ENCODE measurements at regions of chr17 and their contacts with region 1.

Region 1: DNA sequence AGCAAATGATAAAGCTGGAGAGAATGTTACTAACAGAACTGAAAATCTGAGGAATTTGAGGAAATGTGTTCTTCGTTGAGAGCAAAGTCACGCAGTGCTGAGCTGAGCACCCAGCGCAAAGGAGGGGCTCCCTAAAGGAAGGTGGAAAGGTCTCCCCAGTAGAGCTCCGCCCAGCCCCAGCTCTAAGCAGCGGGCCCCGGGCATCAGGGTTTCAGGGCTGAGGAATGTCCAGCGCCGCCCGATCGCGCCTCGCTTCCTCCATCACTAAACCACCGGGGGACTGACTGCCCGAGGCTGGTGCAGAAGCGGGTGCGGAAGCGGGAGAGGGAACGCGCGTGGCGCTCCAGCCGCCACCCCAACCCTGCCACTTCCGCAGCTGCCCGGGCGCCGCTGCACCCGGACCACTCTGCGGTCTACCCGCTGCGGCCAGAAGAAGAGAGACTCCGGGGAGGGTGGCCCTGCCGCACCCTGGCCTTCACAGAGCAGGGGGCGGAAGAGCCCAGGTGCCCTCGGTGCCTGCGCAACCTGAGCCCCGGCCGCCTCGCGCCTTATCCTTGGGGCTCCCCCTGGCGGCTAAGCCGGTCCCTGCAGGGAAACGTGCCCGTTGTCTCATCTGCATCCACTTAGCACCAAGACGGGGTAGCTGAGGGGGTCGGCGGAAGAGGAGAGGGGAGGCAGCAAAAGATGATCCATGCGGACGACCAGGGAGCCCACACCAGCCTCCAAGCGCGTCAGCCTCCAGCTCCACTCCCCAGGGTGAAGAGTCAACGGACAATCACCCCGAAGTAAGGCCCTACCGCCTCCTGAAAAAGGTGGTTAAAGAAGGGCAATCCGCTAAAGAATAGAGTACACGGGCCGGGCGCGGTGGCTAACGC is 12.4 kb upstream of the GUCY2D start:
- DNase-seq: peak; percentile 92
- ATAC-seq: peak; percentile 81

Region 2: DNA sequence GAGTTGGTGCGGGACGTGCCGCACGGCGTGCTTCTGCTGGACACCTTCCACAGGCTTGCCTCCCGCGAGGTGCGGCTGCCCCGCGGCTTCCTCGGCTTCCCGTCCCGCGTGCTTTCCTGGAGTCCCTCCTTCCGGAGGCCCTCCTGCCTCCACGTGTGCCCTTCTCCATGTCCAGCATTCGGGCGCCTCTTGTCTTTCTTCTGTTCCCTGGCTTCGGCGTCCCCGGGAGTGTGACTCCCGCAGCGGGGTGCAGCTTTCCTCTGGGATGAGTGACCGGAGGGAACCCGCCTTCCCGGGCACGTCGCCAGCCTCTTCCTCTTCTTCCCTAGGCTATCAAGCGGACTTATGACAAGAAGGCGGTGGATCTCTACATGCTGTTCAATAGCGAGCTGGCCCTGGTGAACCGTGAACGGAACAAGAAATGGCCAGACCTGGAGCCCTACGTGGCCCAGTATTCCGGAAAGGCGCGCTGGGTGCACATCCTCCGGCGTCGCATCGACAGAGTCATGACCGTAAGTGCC is 249.5 kb before region 1 on chr17:
- intact Hi-C with region 1: loop called (anchors 5 kb)
- DNase-seq: no peak
- ATAC-seq: no peak

Region 3: DNA sequence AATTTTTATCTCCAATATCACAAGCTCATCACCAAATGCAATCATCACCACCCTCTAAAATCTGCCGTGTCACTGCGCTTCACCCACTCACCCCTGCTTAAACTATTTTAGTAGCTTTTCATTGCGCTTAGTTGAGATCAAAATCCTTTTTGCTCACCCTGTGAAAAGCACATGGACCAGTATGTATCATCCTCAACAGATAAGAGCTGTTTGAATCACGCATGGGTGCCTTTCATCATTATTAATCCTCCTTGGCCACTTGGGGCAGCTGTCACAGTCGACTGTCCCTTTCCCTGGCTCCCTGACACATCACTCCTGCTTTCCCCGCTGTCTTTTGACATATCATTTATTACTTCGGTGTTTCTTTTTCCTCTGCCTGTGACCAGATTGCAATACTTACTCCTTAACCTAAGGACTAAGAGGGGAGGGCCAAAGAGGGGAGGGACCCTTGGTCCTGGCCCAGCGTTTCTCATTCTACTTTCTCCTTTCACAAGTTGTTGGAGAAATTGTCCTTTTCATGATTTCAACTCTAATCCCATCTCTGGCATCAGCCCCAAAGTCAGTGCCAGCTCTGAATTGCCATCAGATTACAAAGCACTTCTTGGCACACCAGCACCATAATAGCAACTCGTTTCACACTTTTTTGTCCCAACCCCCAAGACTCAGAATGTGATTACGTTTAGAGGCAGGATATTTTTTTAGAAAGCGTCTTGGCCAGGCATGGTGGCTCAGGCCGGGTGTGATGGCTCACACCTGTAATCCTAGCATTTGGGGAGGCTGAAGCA is 164.6 kb before region 1 on chr17:
- intact Hi-C with region 1: loop called (anchors 5 kb)
- DNase-seq: no peak
- ATAC-seq: no peak

Region 4: DNA sequence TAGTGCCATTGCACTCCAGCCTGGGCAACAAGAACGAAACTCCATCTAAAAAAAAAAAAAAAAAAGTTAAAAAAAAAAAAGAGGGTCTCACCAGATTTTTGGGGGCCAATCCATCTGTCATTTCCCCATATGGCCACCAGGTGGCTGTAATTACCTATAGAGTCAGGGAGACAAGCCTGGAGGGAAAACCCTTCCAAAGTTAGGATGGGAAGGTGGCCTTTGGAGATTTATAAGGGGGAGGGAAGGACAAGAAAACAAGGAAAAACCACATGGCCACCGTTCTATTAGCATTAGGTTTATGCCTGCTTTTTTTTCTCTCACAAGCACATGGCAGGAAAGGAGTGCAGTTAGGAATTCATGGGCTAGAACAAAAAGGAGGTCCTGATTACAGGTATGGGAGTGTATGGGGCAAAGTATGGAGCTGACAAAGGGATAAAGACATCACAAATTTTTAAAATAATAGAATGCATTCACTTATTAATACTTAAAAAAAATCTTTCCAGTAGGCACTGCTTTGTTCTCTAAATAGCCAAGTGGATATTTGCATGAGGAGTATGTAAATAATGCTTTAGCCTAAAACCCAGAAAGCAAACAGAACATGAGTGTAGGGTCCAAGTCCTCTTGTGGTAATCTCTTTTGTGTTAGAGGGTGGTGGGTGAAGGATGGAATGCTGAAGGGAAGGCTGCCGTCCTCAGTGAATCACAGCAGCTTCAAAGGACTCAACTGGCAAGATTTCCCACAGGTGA is 127.2 kb before region 1 on chr17:
- intact Hi-C with region 1: loop called (anchors 2 kb)
- DNase-seq: no peak
- ATAC-seq: no peak

Region 5: DNA sequence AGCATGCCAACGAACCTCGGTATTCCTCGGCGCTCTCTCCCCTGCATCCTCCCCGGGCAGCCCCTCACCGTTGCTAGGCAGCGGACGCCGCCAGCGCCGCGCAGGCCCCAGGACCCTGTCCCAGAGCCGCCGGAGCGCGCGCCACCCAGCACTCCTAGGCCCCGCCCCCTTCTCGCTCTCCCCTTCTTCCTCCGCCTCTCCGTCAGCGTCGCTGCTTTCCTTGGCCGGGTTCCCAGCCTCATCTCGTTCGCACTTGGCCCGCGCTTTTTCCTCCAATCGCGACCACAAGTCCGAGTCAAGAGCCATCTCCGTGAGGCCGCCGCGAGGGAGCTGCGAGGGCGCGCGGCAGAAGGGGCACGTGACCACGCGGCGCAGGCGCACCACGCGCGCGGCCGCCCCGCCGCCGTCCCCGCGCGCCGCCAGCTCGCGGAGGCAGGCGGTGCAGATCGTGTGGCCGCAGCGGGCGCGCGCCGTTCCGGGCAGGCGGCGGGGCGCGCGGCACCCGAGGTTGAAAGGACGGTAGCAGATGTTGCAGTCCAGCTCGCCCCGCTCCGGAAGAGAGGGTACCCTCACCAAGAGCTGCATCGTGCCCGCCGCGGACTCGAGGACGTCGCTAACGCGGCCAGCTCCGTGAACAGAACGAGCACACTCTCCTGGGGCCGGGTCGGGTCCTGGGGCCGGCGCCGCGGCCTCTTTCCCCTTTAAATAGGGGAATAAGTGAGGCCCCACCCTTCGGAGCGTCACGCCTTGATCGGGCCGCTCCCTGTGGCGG is 74.2 kb before region 1 on chr17 and contains the start of gene RNF227:
- intact Hi-C with region 1: loop called (anchors 1 kb)
- DNase-seq: peak; percentile 96
- ATAC-seq: peak; percentile 91
- total RNA-seq, gene RNF227: 0.70 TPM

Region 6: GRCh38 chr17:7951143-7951803 is 38.7 kb before region 1 on chr17:
- intact Hi-C with region 1: no loop called
- DNase-seq: no peak
- ATAC-seq: no peak

Region 7: GRCh38 chr17:8041249-8041928 is 51.4 kb after region 1 on chr17:
- intact Hi-C with region 1: loop called (anchors 5 kb)
- DNase-seq: no peak
- ATAC-seq: peak; percentile 79

Region 8: GRCh38 chr17:8057691-8058114 is 67.7 kb after region 1 on chr17:
- intact Hi-C with region 1: loop called (anchors 5 kb)
- DNase-seq: no peak
- ATAC-seq: peak; percentile 88

Region 9: DNA sequence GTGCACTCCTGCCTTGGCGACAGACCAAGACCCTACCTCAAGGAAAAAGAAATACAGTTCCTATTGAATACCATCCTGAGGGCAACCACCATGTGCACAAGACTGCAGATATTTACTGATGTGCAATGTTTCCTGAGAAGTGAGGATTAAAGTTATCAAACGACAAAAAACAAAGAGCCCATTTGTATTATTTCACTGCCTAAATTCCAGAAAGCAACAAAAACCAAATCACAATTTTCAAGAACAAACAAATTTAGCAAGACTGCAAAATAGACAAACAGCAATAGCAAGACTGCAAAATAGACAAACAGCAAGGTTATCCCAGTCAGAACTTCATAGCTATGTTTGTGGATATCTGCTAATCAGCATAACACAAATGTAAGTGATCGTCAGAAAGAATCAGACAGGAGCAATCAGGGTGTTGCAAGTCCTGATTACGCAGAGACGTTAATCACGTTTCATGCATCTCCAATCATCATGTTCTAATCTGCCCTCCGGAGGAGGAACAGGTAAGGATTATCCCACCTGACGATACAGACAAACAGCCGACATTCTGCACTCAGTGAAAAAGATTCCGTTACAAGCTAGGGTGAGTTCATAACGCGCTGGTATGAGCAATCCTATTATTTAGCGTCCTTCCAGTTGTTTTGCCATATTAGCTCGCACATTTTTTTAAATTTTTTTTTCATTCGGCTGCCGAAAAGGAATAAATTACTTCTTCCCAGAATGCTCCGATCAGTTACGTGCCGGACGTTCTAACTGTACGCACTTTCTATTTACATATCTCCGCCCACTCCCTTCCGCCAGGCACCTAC is 183.2 kb after region 1 on chr17:
- intact Hi-C with region 1: no loop called
- DNase-seq: peak; percentile 75
- ATAC-seq: peak; percentile 91